HCT116 (cell line): ENCODE measurements at regions of chr9 and their contacts with region 1.

Region 1: DNA sequence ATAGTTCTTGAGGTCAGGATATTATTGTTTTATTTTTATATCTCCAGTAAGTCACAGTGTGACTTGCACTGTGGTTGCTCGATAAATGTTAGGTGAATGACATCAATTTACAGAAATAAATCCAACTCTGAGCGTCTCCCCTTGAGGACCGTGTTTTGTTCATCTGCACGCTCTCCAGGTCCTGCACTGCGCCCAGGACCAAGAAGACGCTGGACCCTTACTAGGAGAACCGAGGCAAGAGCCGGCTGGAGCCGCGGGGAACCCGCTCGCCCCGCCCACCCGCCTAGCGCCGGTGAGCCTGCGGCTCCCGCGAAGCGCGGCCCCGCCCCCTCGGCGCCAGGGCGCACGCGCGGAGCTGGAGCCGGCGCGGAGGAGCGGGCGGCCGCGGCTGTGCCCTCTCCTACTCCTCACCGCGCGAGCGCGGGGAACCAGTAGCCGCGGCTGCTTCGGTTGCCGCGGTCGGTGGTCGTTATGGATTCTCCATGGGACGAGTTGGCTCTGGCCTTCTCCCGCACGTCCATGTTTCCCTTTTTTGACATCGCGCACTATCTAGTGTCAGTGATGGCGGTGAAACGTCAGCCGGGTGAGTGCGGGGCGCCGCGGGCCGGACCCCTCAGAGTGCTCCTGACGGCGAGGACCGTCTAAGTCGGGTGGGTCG is at the start of gene TMEM38B:
- DNase-seq: peak; percentile 48
- ATAC-seq: peak; percentile 88
- H3K4me3 ChIP-seq: peak within 1 kb of the TSS; percentile 67 to 75
- H3K27ac ChIP-seq: no peak within 1 kb of the TSS; the same call in 1 of the 2 replicates
- H3K4me1 ChIP-seq: peaks cover 5 to 17% of the 10 kb centered on the region in 2 experiments; a peak in 3 of 4 replicates
- H3K27me3 ChIP-seq: peaks cover 17% of the 10 kb centered on the region
- CTCF ChIP-seq: no peak
- POLR2A ChIP-seq: peak; percentile 78
- RAD21 ChIP-seq: no peak
- total RNA-seq, gene TMEM38B: 24.5 TPM

Region 2: GRCh38 chr9:105341434-105342144 is 352.7 kb before region 1 on chr9:
- CTCF ChIA-PET with region 1: no interaction called
- POLR2A ChIA-PET with region 1: no interaction called
- RAD21 ChIA-PET with region 1: no interaction called
- intact Hi-C with region 1: no loop called
- DNase-seq: no peak
- ATAC-seq: no peak
- H3K4me3 ChIP-seq: no peak overlapping the region
- H3K27ac ChIP-seq: no peak overlapping the region
- H3K4me1 ChIP-seq: no peaks in the 10 kb centered on the region
- H3K27me3 ChIP-seq: no peaks in the 10 kb centered on the region
- CTCF ChIP-seq: no peak
- POLR2A ChIP-seq: no peak
- RAD21 ChIP-seq: no peak

Region 3: DNA sequence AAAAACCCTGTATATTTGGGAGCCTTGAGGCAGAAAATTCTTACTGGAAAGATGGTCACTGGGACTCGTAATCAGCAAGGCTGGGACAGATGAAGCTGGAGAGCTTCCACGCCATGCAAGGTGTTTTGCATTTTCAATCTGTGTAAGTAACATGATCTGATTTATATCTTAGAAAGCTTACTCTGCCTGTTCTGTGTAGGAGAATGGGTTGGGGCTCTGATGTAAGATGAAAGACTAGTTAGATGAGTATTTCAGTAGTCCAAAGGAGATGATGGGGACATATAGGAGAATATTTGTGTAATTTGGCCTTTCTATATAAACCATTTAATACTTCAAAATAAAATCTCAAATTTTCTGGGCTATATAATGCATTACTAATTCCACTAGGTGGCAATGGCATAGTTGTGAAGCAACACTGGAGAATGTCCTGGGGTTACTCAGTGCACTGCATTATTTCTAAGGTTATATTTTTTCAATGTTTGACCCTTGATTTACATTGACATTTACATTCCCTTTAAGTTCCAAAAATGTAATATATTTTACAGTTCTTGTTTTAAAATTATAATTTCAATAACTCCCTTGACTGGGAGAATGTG is 268.4 kb before region 1 on chr9:
- CTCF ChIA-PET with region 1: no interaction called
- POLR2A ChIA-PET with region 1: no interaction called
- RAD21 ChIA-PET with region 1: no interaction called
- intact Hi-C with region 1: loop called (anchors 5 kb)
- DNase-seq: no peak
- ATAC-seq: peak; percentile 85
- H3K4me3 ChIP-seq: no peak overlapping the region
- H3K27ac ChIP-seq: no peak overlapping the region
- H3K4me1 ChIP-seq: no peaks in the 10 kb centered on the region
- H3K27me3 ChIP-seq: no peaks in the 10 kb centered on the region
- CTCF ChIP-seq: peak; percentile 37 to 58 (median 51); a peak in 4 of 6 replicates
- POLR2A ChIP-seq: no peak
- RAD21 ChIP-seq: peak; percentile 71

Region 4: GRCh38 chr9:105557771-105558610 is 136.3 kb before region 1 on chr9 and contains the start of gene FKTN:
- CTCF ChIA-PET with region 1: no interaction called
- POLR2A ChIA-PET with region 1: no interaction called
- RAD21 ChIA-PET with region 1: no interaction called
- intact Hi-C with region 1: loop called (anchors 5 kb)
- DNase-seq: peak; percentile 64
- ATAC-seq: peak; percentile 96
- H3K4me3 ChIP-seq: peak within 1 kb of the TSS; percentile 80 to 86
- H3K27ac ChIP-seq: peak within 1 kb of the TSS; percentile 28; the same call in 1 of the 2 replicates
- H3K4me1 ChIP-seq: peaks cover 3 to 12% of the 10 kb centered on the region in 2 experiments; a peak in 3 of 4 replicates
- H3K27me3 ChIP-seq: no peaks in the 10 kb centered on the region
- CTCF ChIP-seq: no peak
- POLR2A ChIP-seq: peak; percentile 34
- RAD21 ChIP-seq: no peak
- total RNA-seq, gene FKTN: 17.3 TPM

Region 5: GRCh38 chr9:105608721-105609598 is 85.4 kb before region 1 on chr9:
- CTCF ChIA-PET with region 1: no interaction called
- POLR2A ChIA-PET with region 1: no interaction called
- RAD21 ChIA-PET with region 1: no interaction called
- intact Hi-C with region 1: loop called (anchors 5 kb)
- DNase-seq: peak; percentile 48
- ATAC-seq: peak; percentile 82
- H3K4me3 ChIP-seq: no peak overlapping the region
- H3K27ac ChIP-seq: no peak overlapping the region
- H3K4me1 ChIP-seq: no peaks in the 10 kb centered on the region
- H3K27me3 ChIP-seq: no peaks in the 10 kb centered on the region
- CTCF ChIP-seq: peak; percentile 43 to 60 (median 45); a peak in 4 of 6 replicates
- POLR2A ChIP-seq: no peak
- RAD21 ChIP-seq: peak; percentile 59